ENCODE measurements at regions of chr7 and their contacts with region 1.

Region 1: DNA sequence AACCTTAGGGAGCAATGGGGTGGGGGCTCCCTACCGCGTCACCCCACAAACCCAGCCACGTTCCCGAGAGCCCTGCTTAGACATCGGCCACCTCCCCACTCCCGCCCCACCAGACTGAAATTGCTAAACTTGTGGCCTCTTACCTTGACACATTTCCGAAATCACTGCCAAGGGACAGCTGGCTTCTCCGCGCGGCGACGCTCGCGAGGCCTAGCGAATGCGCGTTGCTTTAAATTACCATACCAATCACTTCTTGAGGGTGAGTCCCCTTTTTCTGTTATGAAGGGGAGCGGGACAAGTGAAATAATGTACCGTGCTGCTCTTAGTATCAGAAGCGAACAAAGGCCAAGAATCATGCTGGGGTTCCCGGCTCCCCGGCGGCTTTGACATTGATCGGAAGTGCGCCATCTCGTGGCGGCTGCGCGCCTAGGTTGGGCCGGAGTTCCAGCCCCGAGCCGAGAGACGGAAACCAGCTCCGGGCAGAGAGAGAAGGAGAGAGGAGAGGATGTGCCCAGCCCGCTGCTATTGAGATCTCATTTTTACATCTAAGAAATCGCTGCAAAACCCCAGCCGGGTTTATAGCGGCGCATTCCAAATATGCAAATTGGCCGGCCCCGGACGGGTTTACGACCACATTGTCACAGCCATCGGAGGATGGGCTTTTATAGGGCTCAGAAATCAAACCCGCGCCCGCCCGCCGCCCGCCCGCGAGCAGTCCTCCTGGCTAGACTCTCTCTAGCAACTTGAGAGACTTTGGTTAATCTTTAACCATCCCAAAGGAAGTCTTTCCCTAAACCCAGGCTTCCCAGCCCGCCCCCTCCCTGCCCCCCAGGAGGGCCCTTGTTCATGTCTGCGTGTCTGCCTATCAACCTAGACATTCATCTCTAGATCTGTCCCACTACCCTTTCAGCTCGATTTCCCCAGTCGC is 5.3 kb downstream of the HOXA11 start:
- DNase-seq: peak in 2 of 5 donors; percentile 63 to 79
- ATAC-seq: peak in 3 of 4 donors; percentile 40 to 71 (median 68)
- H3K4me3 ChIP-seq: peak overlapping the region in 1 of 12 donors; percentile 1
- H3K27ac ChIP-seq: peak overlapping the region in 1 of 12 donors; percentile 91
- H3K4me1 ChIP-seq: peaks cover 0 to 29% (median 23%) of the 10 kb centered on the region in 12 donors
- H3K27me3 ChIP-seq: peaks cover 87 to 100% (median 100%) of the 10 kb centered on the region in 9 donors
- CTCF ChIP-seq: peak; percentile 49 to 80 (median 70)
- POLR2A ChIP-seq: no peak

Region 2: GRCh38 chr7:25862260-25863037 is 1317.3 kb before region 1 on chr7:
- intact Hi-C with region 1: loop called in 1 of 10 experiments (anchors 10 kb)
- DNase-seq: peak; percentile 80 to 92 (median 86)
- ATAC-seq: peak; percentile 83 to 96 (median 95)
- H3K4me3 ChIP-seq: peak overlapping the region in 5 of 12 donors; percentile 4 to 23 (median 7)
- H3K27ac ChIP-seq: no peak overlapping the region
- H3K4me1 ChIP-seq: peaks cover 0 to 29% (median under 1%) of the 10 kb centered on the region in 12 donors
- H3K27me3 ChIP-seq: peaks cover 78 to 100% (median 100%) of the 10 kb centered on the region in 9 donors
- CTCF ChIP-seq: no peak
- POLR2A ChIP-seq: no peak